Dendritic cell treated with granulocyte-macrophage colony-stimulating factor and Interleukin-4, amounts not matched to agents 40 ng/mL and 50 ng/mL, for 4 days (primary cell): ENCODE measurements at regions of chr13 and their contacts with region 1.

Region 1: DNA sequence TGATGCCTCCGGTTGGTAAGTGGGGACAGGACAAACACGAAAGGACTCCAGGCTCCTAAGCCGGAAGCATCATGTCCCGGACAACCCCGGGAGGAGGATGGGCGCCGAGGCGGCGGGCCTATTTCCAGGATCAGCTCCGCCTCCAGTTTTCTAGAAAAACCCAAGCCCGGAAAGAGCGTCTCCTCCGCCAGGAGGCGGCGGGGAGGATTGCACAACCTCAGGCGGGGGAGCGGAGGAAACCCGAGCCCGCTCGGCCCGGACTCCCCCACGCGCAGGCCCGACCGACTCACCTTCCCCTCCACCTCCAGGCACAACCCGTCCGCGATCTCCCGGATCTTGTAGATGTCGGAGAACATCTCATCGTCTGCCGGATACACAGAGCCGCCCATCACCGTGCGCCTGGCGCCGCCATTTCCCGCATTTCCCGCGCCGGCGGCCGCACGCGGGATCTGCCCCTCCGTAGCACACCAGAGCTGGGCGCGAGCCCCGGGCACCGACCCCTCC is 509 bp downstream of the TPT1 start:
- H3K4me3 Mint-ChIP-seq: peak overlapping the region; percentile 91
- H3K27ac Mint-ChIP-seq: peak overlapping the region; percentile 99
- H3K4me1 Mint-ChIP-seq: peaks cover 43% of the 10 kb centered on the region
- H3K27me3 Mint-ChIP-seq: no peaks in the 10 kb centered on the region

Region 2: GRCh38 chr13:45417790-45418534 is 77.5 kb after region 1 on chr13 and contains the start of gene SLC25A30:
- intact Hi-C with region 1: loop called (anchors 5 kb)
- H3K4me3 Mint-ChIP-seq: peak within 1 kb of the TSS; percentile 99
- H3K27ac Mint-ChIP-seq: peak within 1 kb of the TSS; percentile 94
- H3K4me1 Mint-ChIP-seq: peaks cover 21% of the 10 kb centered on the region
- H3K27me3 Mint-ChIP-seq: peaks cover 1% of the 10 kb centered on the region